Aorta (tissue), 5 donors: ENCODE measurements at regions of chr18 and their contacts with region 1.

Region 1: GRCh38 chr18:37341016-37341415 is 224.6 kb downstream of the CELF4 start:
- DNase-seq: no peak
- ATAC-seq: no peak
- H3K4me3 ChIP-seq: no peak overlapping the region
- H3K27ac ChIP-seq: no peak overlapping the region
- H3K4me1 ChIP-seq: no peaks in the 10 kb centered on the region
- H3K27me3 ChIP-seq: no peaks in the 10 kb centered on the region

Region 2: GRCh38 chr18:36942264-36942663 is 398.8 kb before region 1 on chr18:
- intact Hi-C with region 1: loop called in 1 of 2 experiments (anchors 5 kb)
- DNase-seq: no peak
- ATAC-seq: no peak
- H3K4me3 ChIP-seq: no peak overlapping the region
- H3K27ac ChIP-seq: no peak overlapping the region
- H3K4me1 ChIP-seq: no peaks in the 10 kb centered on the region
- H3K27me3 ChIP-seq: no peaks in the 10 kb centered on the region